Activated CD4-positive, alpha-beta memory T cell treated with anti-CD3 and anti-CD28 coated beads, Interleukin-2, amount 10 ng/mL, durations not matched to agents 7 days and 5 days (primary cell): ENCODE measurements at regions of chr1 and their contacts with region 1.

Region 1: DNA sequence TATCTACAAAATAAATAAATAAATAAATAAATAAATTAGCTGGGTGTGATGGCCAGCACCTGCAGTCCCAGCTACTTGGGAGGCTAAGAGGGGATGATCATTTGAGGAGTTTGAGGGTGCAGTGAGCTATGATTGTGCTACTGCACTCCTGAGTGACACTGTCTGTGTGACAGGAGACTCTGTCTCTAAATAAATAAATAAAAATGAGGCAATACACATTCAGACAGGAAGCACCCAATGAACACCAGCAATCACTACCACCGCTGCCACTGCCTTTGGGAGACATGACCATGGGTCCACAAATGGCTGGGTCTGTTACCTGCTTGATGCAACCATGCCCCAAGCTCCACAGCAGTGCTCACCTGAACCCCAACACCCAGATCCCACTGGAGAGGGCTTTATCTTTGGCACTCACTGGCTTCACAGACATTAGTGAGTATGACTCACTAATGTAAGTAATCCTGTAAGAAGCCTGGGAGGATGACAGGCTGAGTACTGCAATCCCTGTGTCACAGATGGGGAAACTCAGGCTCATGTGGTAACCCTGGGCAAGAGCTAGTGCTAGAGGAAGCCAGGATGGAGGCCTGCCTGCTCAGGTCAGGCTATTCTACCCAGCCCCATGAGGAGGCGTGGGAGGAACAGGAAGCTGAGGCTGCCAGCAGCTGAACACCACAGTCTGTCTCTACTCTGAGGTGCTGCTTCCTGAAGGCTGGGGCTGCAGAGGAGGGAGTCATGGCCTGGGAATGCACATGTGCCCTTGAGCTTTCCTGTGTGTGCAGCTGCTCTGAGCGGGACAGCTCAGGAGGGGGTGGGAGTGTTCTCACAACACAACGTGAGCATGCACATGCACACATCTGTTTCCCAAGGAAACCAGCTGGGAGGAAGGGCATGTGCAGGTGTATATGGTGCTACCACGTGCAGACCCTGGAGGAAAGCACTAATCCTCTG is 43.0 kb downstream of the SLC9A1 start:
- DNase-seq: peak; percentile 79
- H3K4me3 Mint-ChIP-seq: no peak overlapping the region
- H3K27ac Mint-ChIP-seq: peak overlapping the region; percentile 70
- H3K4me1 Mint-ChIP-seq: peaks cover 43% of the 10 kb centered on the region
- H3K27me3 Mint-ChIP-seq: no peaks in the 10 kb centered on the region

Region 2: GRCh38 chr1:26864610-26865527 is 247.0 kb before region 1 on chr1:
- CTCF ChIA-PET with region 1: no interaction called
- POLR2A ChIA-PET with region 1: no interaction called
- DNase-seq: peak; percentile 97
- H3K4me3 Mint-ChIP-seq: peak overlapping the region; percentile 90
- H3K27ac Mint-ChIP-seq: peak overlapping the region; percentile 93
- H3K4me1 Mint-ChIP-seq: peaks cover 37% of the 10 kb centered on the region
- H3K27me3 Mint-ChIP-seq: no peaks in the 10 kb centered on the region

Region 3: GRCh38 chr1:27074175-27074780 is 37.6 kb before region 1 on chr1:
- CTCF ChIA-PET with region 1: no interaction called
- POLR2A ChIA-PET with region 1: no interaction called
- DNase-seq: no peak
- H3K4me3 Mint-ChIP-seq: no peak overlapping the region
- H3K27ac Mint-ChIP-seq: no peak overlapping the region
- H3K4me1 Mint-ChIP-seq: no peaks in the 10 kb centered on the region
- H3K27me3 Mint-ChIP-seq: peaks cover 7% of the 10 kb centered on the region

Region 4: GRCh38 chr1:27136998-27137542 is 25.2 kb after region 1 on chr1:
- CTCF ChIA-PET with region 1: interaction called, 17 read pairs
- POLR2A ChIA-PET with region 1: interaction called, 29 read pairs
- DNase-seq: peak; percentile 89
- H3K4me3 Mint-ChIP-seq: peak overlapping the region; percentile 82
- H3K27ac Mint-ChIP-seq: peak overlapping the region; percentile 97
- H3K4me1 Mint-ChIP-seq: peaks cover 42% of the 10 kb centered on the region
- H3K27me3 Mint-ChIP-seq: no peaks in the 10 kb centered on the region

Region 5: GRCh38 chr1:27350663-27351540 is 239.0 kb after region 1 on chr1:
- CTCF ChIA-PET with region 1: no interaction called
- POLR2A ChIA-PET with region 1: no interaction called
- DNase-seq: no peak
- H3K4me3 Mint-ChIP-seq: no peak overlapping the region
- H3K27ac Mint-ChIP-seq: no peak overlapping the region
- H3K4me1 Mint-ChIP-seq: peaks cover 24% of the 10 kb centered on the region
- H3K27me3 Mint-ChIP-seq: no peaks in the 10 kb centered on the region